ENCODE measurements at regions of chr6 and their contacts with region 1.

Region 1: DNA sequence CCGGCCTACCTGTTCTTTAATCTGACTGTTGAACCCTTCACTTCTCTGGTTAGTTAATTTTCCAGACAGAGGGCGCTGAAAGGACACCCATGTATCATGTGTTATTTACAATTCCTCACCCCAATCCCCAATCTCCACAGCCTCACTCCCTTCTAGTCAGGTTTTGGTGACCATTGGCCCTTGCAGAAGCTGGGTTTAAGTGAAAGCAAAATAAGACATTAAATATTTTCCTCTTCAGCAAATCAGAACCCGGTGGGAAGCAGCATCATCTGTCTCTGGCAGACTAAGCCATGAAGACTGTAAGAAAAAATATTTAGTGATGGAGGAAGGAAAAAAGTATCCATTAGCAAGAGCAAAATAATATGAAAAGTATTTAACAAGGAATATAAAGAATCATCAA is 9.4 kb upstream of the HLA-DQA1 start:
- DNase-seq: peak; percentile 86
- H3K4me3 Mint-ChIP-seq: peak overlapping the region; percentile 16
- H3K27ac Mint-ChIP-seq: peak overlapping the region; percentile 52
- H3K4me1 Mint-ChIP-seq: peaks cover 33% of the 10 kb centered on the region
- H3K27me3 Mint-ChIP-seq: peaks cover 4% of the 10 kb centered on the region

Region 2: DNA sequence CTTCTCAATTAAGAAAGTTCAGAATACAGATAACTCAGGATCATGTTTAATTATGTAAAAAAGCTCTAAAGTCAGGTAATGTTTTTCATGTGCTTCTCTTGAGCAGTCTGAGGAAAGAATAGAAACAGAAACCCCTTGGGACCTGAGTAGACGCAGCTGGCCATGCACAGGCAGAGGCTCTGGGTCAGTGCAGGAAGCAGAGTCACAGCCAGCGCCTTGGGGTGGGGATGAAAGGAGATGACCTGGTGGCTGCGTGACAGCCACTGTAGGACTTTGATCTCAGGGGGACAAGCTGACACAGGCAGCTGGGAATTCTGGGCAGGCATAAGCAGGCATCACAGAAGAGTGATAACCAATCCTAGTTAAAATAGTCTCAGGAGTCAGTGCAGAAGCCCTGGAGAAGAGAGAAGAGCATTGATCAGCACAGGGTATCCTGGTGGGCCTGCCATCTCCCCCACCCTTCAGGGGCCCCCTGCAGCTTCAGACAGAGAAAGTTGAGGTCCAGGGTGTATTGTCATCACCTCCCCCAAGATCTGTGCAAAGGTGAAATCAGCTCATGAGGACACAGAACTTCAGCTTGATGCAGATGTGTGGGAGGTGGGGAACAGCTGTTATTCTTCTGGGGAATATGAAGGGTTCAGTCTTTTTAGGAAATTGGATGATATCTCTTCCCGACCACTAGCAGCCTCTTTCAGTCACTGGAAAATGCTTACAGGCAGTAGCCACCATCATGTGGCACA is 32.2 kb after region 1 on chr6:
- intact Hi-C with region 1: loop called (anchors 2 kb)
- DNase-seq: no peak
- H3K4me3 Mint-ChIP-seq: peak overlapping the region; percentile 13
- H3K27ac Mint-ChIP-seq: peak overlapping the region; percentile 27
- H3K4me1 Mint-ChIP-seq: peaks cover 23% of the 10 kb centered on the region
- H3K27me3 Mint-ChIP-seq: peaks cover 19% of the 10 kb centered on the region